Lower leg skin (tissue), 4 donors: ENCODE measurements at regions of chr3 and their contacts with region 1.

Region 1: GRCh38 chr3:101827211-101828174 is 21.8 kb upstream of the NFKBIZ start:
- DNase-seq: peak; percentile 84 to 94
- H3K4me3 ChIP-seq: peak overlapping the region; percentile 21
- CTCF ChIP-seq: no peak
- POLR2A ChIP-seq: no peak

Region 2: DNA sequence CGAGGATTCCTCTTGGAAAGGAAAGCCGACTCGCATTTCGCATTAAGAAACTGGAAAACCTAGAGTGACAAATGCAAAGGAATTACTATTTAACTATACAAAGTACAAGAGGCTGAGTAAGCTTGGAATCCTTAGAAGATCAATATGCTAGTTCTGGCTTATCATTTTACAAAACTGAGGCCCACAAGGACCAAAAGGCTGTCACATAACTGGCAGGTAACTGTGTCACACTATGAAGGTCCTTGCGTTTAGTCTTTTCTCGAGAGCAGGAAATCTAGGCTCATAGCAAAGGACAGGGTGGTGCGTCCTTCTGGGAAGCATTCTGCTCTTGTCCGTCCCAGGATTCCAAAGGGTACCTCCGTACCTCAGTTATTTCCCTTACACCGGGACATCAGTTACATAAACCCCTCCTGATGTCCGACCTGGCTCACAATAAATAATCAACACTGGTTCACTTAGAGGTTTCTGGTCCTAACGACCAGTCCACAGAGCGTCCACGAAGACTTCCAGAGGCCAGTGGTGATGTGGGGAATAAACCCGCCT is 141.6 kb before region 1 on chr3:
- intact Hi-C with region 1: loop called (anchors 5 kb)
- DNase-seq: no peak
- H3K4me3 ChIP-seq: peak overlapping the region; percentile 66
- CTCF ChIP-seq: no peak
- POLR2A ChIP-seq: no peak

Region 3: GRCh38 chr3:101884776-101885175 is 57.3 kb after region 1 on chr3:
- intact Hi-C with region 1: loop called (anchors 2 kb)
- DNase-seq: no peak
- H3K4me3 ChIP-seq: no peak overlapping the region
- CTCF ChIP-seq: no peak
- POLR2A ChIP-seq: no peak

Region 4: GRCh38 chr3:101928890-101929289 is 101.4 kb after region 1 on chr3:
- intact Hi-C with region 1: no loop called
- DNase-seq: no peak
- H3K4me3 ChIP-seq: no peak overlapping the region
- CTCF ChIP-seq: no peak
- POLR2A ChIP-seq: no peak